ENCODE measurements at regions of chr2 and their contacts with region 1.

Region 1: GRCh38 chr2:196873511-196873910 is 53.0 kb downstream of the PGAP1 start:
- DNase-seq: no peak
- H3K4me3 ChIP-seq: no peak overlapping the region
- H3K27ac ChIP-seq: no peak overlapping the region
- H3K4me1 ChIP-seq: no peaks in the 10 kb centered on the region
- H3K27me3 ChIP-seq: no peaks in the 10 kb centered on the region
- CTCF ChIP-seq: no peak

Region 2: GRCh38 chr2:198273660-198274059 is 1400.1 kb after region 1 on chr2:
- intact Hi-C with region 1: loop called (anchors 5 kb)
- DNase-seq: no peak
- H3K4me3 ChIP-seq: no peak overlapping the region
- H3K27ac ChIP-seq: no peak overlapping the region
- H3K4me1 ChIP-seq: no peaks in the 10 kb centered on the region
- H3K27me3 ChIP-seq: no peaks in the 10 kb centered on the region
- CTCF ChIP-seq: no peak